CD8-positive, alpha-beta T cell (primary cell): ENCODE measurements at regions of chr6 and their contacts with region 1.

Region 1: GRCh38 chr6:14210663-14211561 is 93.3 kb downstream of the CD83 start:
- DNase-seq: peak; percentile 79 to 95 (median 85)
- ATAC-seq: peak; percentile 89
- H3K4me3 ChIP-seq: peak overlapping the region; percentile 52 to 78
- H3K4me3 Mint-ChIP-seq: peak overlapping the region; percentile 89
- H3K27ac ChIP-seq: peak overlapping the region; percentile 11 to 64
- H3K27ac Mint-ChIP-seq: peak overlapping the region; percentile 74
- H3K4me1 ChIP-seq: peaks cover 16% of the 10 kb centered on the region
- H3K4me1 Mint-ChIP-seq: peaks cover 14% of the 10 kb centered on the region
- H3K27me3 ChIP-seq: no peaks in the 10 kb centered on the region
- H3K27me3 Mint-ChIP-seq: no peaks in the 10 kb centered on the region
- CTCF ChIP-seq: peak; percentile 76

Region 2: DNA sequence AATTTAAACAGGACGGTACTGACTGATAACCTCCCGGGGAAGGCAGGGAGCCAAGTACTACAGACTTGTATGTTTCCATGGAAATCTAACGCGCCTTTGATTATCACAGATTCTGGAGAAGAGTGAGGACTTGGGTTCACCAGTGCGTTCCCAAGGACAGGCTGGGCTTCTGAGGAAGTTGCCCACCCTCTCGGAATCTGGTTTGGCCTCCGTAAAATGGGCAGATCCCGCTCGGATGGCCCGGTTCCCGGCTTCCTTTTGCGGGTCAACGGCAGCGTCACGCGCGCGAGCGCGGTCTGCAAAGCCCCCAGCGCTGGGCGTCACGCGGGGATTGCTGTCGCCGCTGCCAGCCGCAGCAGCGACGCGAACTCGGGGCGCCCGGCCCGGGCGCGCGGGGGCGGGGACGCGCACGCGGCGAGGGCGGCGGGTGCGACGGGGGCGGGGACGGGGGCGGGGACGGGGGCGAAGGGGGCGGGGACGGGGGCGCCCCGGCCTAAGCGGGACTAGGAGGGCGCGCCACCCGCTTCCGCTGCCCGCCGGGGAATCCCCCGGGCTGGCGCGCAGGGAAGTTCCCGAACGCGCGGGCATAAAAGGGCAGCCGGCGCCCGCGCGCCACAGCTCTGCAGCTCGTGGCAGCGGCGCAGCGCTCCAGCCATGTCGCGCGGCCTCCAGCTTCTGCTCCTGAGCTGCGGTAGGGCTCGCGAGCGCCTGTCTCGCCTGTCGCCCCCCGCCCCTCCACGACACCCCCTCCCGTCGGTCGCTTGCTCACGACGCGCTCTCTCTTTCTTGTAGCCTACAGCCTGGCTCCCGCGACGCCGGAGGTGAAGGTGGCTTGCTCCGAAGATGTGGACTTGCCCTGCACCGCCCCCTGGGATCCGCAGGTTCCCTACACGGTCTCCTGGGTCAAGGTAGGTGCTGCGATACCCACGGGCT is 93.5 kb before region 1 on chr6 and contains the start of gene CD83:
- CTCF ChIA-PET with region 1: no interaction called
- POLR2A ChIA-PET with region 1: no interaction called
- intact Hi-C with region 1: loop called (anchors 2 to 5 kb)
- DNase-seq: peak; percentile 72 to 97 (median 84)
- ATAC-seq: peak; percentile 94
- H3K4me3 ChIP-seq: peak within 1 kb of the TSS; percentile 90 to 92
- H3K4me3 Mint-ChIP-seq: peak within 1 kb of the TSS; percentile 93
- H3K27ac ChIP-seq: peak within 1 kb of the TSS; percentile 66 to 81
- H3K27ac Mint-ChIP-seq: peak within 1 kb of the TSS; percentile 96
- H3K4me1 ChIP-seq: peaks cover 8% of the 10 kb centered on the region
- H3K4me1 Mint-ChIP-seq: peaks cover 39% of the 10 kb centered on the region
- H3K27me3 ChIP-seq: no peaks in the 10 kb centered on the region
- H3K27me3 Mint-ChIP-seq: no peaks in the 10 kb centered on the region
- CTCF ChIP-seq: no peak
- total RNA-seq, gene CD83: 57.2 to 60.4 TPM

Region 3: GRCh38 chr6:14658886-14659561 is 448.1 kb after region 1 on chr6:
- CTCF ChIA-PET with region 1: interaction called, 4 read pairs
- POLR2A ChIA-PET with region 1: no interaction called
- intact Hi-C with region 1: loop called (anchors 2 to 10 kb)
- DNase-seq: peak in 1 of 9 experiments; percentile 25
- ATAC-seq: no peak
- H3K4me3 ChIP-seq: no peak overlapping the region
- H3K4me3 Mint-ChIP-seq: no peak overlapping the region
- H3K27ac ChIP-seq: no peak overlapping the region
- H3K27ac Mint-ChIP-seq: no peak overlapping the region
- H3K4me1 ChIP-seq: peaks cover 26% of the 10 kb centered on the region
- H3K4me1 Mint-ChIP-seq: peaks cover 25% of the 10 kb centered on the region
- H3K27me3 ChIP-seq: no peaks in the 10 kb centered on the region
- H3K27me3 Mint-ChIP-seq: no peaks in the 10 kb centered on the region
- CTCF ChIP-seq: no peak

Region 4: DNA sequence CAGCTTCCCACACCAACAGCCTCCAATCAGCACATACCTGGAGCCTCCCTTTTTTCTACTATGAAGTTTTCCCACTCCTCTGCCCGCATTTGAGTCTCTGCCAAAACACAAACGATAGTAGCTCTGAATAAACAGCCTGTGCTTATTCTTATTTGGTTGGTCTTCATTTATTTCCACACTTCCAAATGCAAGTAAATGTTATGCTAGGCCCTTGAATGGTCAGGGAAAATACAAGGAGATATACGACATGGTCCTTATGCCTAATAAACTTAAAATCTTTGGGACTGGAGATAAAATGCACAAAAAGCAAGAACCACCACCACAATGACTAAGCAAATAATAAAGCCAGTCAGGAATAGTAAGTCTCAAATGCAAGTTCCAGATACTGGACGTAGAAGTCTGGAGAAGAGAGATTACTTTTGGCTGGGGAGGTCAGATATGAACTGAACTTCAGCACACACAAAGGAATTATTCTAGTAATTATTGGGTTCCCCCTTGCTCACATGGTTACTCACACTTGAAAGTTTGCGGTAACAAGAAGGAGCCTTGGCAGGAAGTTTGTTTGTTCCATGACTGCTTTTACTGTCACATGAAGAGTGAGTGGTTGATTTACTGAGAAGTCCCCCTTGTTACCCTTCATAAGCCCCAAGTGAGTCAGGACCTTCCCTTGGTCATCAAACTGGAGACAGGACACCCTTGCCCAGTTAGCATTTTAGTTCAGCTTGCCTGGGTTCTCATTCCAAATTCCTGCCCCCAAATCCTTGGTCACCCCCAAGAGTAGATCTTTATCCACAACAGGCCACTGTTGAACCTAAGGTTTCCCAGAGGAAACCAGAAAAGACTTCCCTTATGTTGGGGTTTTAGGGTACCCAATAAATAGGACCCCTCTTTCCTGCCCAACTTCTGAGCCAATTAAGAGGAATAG is 523.8 kb after region 1 on chr6:
- CTCF ChIA-PET with region 1: no interaction called
- POLR2A ChIA-PET with region 1: no interaction called
- intact Hi-C with region 1: loop called in 1 of 2 experiments (anchors 5 kb)
- DNase-seq: peak in 6 of 9 experiments; percentile 21 to 79 (median 46)
- ATAC-seq: peak; percentile 41
- H3K4me3 ChIP-seq: no peak overlapping the region
- H3K4me3 Mint-ChIP-seq: peak overlapping the region; percentile 51
- H3K27ac ChIP-seq: no peak overlapping the region
- H3K27ac Mint-ChIP-seq: peak overlapping the region; percentile 4
- H3K4me1 ChIP-seq: peaks cover 44% of the 10 kb centered on the region
- H3K4me1 Mint-ChIP-seq: peaks cover 65% of the 10 kb centered on the region
- H3K27me3 ChIP-seq: no peaks in the 10 kb centered on the region
- H3K27me3 Mint-ChIP-seq: no peaks in the 10 kb centered on the region
- CTCF ChIP-seq: no peak

Region 5: GRCh38 chr6:15441215-15441868 is 1230.4 kb after region 1 on chr6:
- CTCF ChIA-PET with region 1: interaction called, 3 read pairs
- POLR2A ChIA-PET with region 1: no interaction called
- intact Hi-C with region 1: loop called in 1 of 2 experiments (anchors 1 kb)
- DNase-seq: peak in 4 of 9 experiments; percentile 31 to 71 (median 46)
- ATAC-seq: peak; percentile 65
- H3K4me3 ChIP-seq: no peak overlapping the region
- H3K4me3 Mint-ChIP-seq: no peak overlapping the region
- H3K27ac ChIP-seq: no peak overlapping the region
- H3K27ac Mint-ChIP-seq: no peak overlapping the region
- H3K4me1 ChIP-seq: peaks cover 33% of the 10 kb centered on the region
- H3K4me1 Mint-ChIP-seq: peaks cover 79% of the 10 kb centered on the region
- H3K27me3 ChIP-seq: no peaks in the 10 kb centered on the region
- H3K27me3 Mint-ChIP-seq: no peaks in the 10 kb centered on the region
- CTCF ChIP-seq: peak; percentile 76

Region 6: DNA sequence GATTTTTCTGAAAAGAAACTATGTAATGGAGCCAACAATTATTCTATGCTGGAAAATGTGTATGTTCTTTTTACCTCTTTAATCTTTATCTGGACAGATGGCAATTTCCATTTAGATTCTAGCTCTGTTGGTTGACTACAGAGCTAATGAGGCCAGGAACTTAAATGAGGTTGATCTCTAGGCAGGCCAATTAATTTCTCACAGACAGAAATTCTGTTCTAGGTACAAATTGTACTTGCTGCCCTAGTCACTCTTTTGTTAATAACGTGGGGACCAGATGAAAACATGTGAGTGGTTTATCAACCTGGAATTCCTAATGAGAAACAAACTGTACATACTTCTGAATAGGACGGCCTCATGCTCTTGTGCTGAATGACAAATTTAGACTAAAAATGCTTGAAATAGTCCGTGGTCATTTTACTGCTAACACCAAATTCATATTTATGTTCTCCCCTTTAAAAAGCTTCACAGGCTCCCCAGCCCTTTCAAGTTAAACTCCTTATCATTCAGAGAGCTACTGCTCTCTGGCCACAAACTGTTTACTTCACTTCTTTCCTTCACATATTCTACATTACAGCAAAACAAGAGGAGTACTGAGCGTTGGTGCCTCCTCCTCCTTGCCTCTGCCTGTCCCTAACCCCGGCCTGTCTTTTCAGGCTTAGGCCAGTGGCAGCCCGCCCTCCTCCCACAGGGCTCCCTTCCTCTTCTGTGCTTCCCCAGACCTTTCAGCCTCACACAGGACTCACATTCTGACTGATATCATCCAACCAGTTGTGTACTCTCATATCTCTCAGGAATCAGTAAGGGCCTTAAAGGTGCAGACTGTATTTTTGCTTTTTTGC is 1410.5 kb after region 1 on chr6:
- CTCF ChIA-PET with region 1: interaction called, 3 read pairs
- POLR2A ChIA-PET with region 1: no interaction called
- intact Hi-C with region 1: loop called (anchors 1 kb)
- DNase-seq: peak in 1 of 9 experiments; percentile 12
- ATAC-seq: no peak
- H3K4me3 ChIP-seq: no peak overlapping the region
- H3K4me3 Mint-ChIP-seq: no peak overlapping the region
- H3K27ac ChIP-seq: no peak overlapping the region
- H3K27ac Mint-ChIP-seq: no peak overlapping the region
- H3K4me1 ChIP-seq: peaks cover 11% of the 10 kb centered on the region
- H3K4me1 Mint-ChIP-seq: peaks cover 47% of the 10 kb centered on the region
- H3K27me3 ChIP-seq: no peaks in the 10 kb centered on the region
- H3K27me3 Mint-ChIP-seq: no peaks in the 10 kb centered on the region
- CTCF ChIP-seq: no peak